ENCODE measurements at regions of chr11 and their contacts with region 1.

Region 1: GRCh38 chr11:85902353-85902752 is 47.2 kb downstream of the CCDC83 start:
- DNase-seq: no peak
- H3K4me3 ChIP-seq: no peak overlapping the region
- H3K27ac ChIP-seq: no peak overlapping the region
- H3K4me1 ChIP-seq: no peaks in the 10 kb centered on the region
- CTCF ChIP-seq: no peak

Region 2: GRCh38 chr11:85705805-85706204 is 196.5 kb before region 1 on chr11:
- CTCF ChIA-PET with region 1: no interaction called
- POLR2A ChIA-PET with region 1: no interaction called
- intact Hi-C with region 1: no loop called
- DNase-seq: no peak
- H3K4me3 ChIP-seq: no peak overlapping the region
- H3K27ac ChIP-seq: no peak overlapping the region
- H3K4me1 ChIP-seq: no peaks in the 10 kb centered on the region
- CTCF ChIP-seq: no peak

Region 3: DNA sequence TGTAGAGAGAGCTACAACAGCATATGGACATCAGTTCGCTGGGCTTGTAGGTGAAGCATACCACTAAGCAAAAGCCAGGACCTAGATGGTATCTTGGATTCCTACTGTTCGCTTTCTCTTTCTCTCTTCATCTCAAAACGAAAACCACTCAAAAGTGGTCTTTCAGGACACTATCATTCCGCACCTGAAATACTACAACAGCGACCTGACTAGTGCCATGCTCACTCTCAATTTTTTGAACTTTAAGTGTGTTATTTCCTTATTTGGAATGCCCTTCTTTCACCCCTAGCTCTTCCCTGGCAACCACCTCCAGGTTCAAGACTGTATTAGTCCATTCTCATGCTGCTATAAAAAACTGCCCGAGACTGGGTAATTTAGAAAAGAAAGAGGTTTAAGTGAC is 12.1 kb after region 1 on chr11:
- CTCF ChIA-PET with region 1: no interaction called
- POLR2A ChIA-PET with region 1: interaction called, 3 read pairs
- intact Hi-C with region 1: loop called (anchors 2 kb)
- DNase-seq: no peak
- H3K4me3 ChIP-seq: no peak overlapping the region
- H3K27ac ChIP-seq: no peak overlapping the region
- H3K4me1 ChIP-seq: no peaks in the 10 kb centered on the region
- CTCF ChIP-seq: no peak

Measured in OCI-LY7 (cell line).